OCI-LY7 (cell line): ENCODE measurements at regions of chr20 and their contacts with region 1.

Region 1: DNA sequence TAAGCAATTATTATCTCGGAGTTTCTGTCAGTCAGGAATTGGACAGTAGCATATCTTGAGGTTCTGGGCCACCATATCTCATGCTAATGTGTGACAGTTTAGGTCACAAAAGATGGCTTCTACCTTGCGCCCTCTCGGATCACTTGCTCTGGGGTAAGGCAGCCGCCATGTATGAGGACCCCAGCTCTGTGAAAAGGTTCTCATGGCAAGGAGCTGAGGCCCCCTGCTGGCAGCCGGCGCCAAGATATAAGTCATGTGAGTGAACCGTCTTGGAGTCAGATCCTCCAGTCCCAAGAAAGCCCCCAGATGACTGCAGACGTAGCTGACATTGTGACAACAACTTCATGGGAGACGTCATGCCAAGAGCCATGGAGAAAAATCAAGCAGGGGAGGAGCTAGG is 670.8 kb downstream of the KIF16B start:
- DNase-seq: peak; percentile 38
- H3K4me3 ChIP-seq: no peak overlapping the region
- H3K27ac ChIP-seq: no peak overlapping the region
- H3K4me1 ChIP-seq: no peaks in the 10 kb centered on the region
- CTCF ChIP-seq: peak; percentile 78

Region 2: DNA sequence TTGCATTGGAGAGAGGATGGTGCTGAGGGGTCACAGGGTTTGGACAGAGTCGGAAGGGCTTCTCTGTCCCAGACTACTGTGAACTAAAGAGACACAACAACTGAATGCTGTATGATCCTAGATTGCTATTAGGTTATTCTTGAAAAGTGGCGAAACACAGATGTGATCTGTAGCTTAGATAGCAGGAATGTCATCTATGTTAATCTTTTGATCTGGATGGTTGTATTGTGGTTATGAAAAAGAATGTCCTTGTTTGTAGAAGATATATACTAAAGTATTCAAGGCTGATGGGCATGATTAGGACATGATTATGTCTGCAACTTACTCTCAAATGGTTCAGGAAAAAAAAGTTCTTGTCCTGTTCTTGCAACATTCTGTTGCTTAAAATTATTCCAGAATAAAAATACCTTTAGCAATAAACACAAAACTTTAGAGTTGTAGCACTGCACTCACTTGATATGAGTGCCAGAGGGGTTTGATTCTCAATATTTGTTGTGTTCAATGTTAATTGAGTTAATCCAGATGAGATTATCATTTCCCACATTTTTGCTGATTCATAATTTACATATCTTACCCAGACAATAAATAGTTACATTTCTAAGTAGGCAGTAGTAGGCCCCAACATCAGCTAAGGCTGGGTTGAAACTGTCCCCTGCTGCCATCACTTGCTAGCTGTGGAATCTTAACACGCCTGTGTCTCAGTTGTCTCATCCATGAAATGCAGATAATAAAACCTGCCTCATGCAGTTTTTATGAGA is 25.6 kb after region 1 on chr20:
- CTCF ChIA-PET with region 1: no interaction called
- POLR2A ChIA-PET with region 1: interaction called, 12 read pairs
- intact Hi-C with region 1: no loop called
- DNase-seq: no peak
- H3K4me3 ChIP-seq: no peak overlapping the region
- H3K27ac ChIP-seq: no peak overlapping the region
- H3K4me1 ChIP-seq: peaks cover 3% of the 10 kb centered on the region
- CTCF ChIP-seq: no peak

Region 3: DNA sequence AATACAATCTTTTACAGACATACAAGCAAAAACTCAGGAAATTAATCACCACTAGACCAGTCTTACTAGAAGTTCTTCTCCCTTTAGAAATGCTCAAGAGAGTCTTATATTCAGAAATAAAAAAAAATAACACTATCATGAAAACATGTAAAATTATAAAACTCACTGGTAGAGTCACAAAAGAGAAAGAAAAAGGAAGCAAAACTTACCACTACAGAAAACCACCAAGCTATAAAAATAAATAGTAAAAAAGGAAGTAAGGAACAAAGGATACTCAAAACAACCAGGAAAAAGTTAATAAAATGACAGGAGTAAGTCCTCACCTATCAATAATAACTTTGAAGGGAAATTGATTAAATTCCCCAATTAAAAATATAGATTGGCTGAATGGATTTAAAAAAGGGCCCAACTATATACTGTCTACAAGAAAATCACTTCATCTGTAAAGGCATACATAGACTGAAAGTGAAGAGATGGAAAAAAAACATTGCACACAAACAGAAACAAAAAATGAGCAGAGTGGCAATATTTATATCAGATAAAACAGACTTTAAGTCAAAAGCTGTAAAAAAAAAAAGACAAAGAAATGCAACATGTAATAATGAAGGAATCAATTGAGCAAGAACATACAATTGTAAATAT is 181.3 kb after region 1 on chr20:
- CTCF ChIA-PET with region 1: no interaction called
- POLR2A ChIA-PET with region 1: no interaction called
- intact Hi-C with region 1: no loop called
- DNase-seq: no peak
- H3K4me3 ChIP-seq: no peak overlapping the region
- H3K27ac ChIP-seq: peak overlapping the region; percentile 18
- H3K4me1 ChIP-seq: peaks cover 30% of the 10 kb centered on the region
- CTCF ChIP-seq: no peak